Motor neuron (in vitro differentiated cells): ENCODE measurements at regions of chr11 and their contacts with region 1.

Region 1: DNA sequence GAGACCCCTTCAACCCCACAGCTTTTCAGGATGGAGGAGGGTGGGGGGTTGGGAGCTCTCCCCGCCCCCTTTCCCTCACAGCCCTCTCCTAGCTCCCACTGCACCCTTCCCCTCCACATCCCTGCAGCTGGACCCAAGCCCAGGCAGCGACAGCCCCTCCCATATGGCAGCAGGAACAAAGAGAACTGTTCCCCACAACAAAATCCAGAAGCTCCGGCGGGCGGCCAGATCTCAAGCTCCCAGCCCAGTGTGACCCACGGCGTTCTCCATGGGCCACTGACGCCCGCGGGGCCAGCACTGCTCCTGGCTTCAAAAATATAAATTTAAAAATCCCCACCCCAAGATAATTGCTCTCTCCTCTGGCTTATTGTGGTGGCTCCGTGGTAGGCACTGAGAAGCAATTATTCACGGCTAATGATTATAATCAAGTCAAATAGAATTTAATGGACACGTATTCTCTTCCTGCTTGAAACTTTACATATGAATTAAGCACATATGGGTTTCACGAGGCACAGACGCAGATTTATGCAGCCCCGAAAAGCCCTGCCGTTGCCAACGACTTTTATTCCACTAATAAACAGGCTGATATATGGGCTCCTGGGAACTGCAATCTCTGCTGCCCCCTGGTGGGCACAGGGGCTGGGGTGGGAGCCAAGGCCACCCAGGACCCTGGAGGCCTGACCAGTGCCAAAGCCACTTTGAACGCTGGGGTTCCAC is 17.6 kb downstream of the MACROD1 start:
- ATAC-seq: peak; percentile 45 to 88 (median 62)
- H3K4me3 ChIP-seq: peak overlapping the region in 3 of 5 donors; percentile 0 to 13 (median 6)
- H3K27ac ChIP-seq: peak overlapping the region; percentile 10 to 41
- H3K4me1 ChIP-seq: peaks cover 49 to 51% of the 10 kb centered on the region in 2 donors

Region 2: GRCh38 chr11:64000026-64000739 is 148.2 kb before region 1 on chr11:
- in situ Hi-C with region 1: loop called in 7 of 9 experiments (anchors 5 to 25 kb)
- ATAC-seq: peak; percentile 48 to 68 (median 60)
- H3K4me3 ChIP-seq: peak overlapping the region in 2 of 5 donors; percentile 19 to 21
- H3K27ac ChIP-seq: peak overlapping the region in 1 of 2 donors; percentile 58
- H3K4me1 ChIP-seq: peaks cover 31 to 47% of the 10 kb centered on the region in 2 donors

Region 3: DNA sequence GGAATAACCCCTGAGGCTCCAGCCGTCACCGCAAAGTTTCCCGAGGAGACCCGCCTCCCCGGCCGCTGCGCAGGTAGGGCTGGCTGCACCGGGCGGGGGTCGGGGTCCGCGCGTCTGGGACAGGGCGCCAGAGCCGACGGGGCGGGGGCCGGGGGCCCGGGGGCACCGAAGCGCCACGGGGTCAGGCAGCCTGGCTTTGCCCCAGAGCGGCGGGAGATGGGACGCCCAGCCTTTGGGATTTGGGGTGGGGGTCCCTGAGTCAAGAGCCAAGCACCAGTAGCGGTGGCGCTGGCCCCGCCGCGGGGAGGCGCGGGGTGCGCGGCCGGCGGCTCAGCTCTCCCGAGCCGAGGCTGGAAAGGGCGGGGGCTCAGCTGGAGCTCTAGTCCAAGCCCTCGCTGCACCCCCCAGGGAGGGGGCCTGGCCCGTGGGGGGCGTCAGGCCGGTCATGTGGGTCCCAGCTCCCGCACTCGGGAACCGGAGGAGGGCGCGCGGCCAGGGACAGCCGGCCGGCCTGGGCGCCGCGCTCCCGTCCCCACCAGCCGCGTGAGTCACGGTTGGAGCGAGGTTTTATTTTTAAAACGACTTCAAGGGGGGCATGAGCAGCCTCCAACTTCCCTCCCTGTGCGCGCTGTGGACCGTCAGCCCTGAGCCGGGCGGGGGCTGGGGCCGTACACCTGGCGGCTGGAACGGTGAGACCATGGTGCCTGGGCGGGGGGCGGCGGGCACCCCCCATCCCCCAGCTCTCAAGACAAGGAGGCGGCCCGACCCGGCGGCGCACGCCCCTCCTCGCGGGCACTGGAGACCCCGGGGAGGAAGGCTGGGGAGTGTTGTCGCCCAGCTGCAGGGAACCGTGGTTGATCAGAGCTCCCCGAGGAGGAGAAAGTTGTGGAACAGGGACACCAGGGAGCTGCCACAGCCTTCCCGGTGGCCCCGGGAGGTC is 112.0 kb before region 1 on chr11:
- in situ Hi-C with region 1: loop called in 1 of 9 experiments (anchors 25 kb)
- ATAC-seq: peak; percentile 61 to 79 (median 74)
- H3K4me3 ChIP-seq: peak overlapping the region; percentile 49 to 74 (median 66)
- H3K27ac ChIP-seq: peak overlapping the region; percentile 59 to 65
- H3K4me1 ChIP-seq: peaks cover 39 to 43% of the 10 kb centered on the region in 2 donors